Activated T-helper 1 cell treated with anti-CD3 and anti-CD28 coated beads, Interleukin-12 subunit alpha, Interleukin-12 subunit beta, Interleukin-2, Interleukin-4 antibody, amounts not matched to agents 30 ng/mL and 10 ng/mL and 1 ng/mL, durations not matched to agents 14 hours and 24 hours and 36 hours (primary cell): ENCODE measurements at regions of chr2 and their contacts with region 1.

Region 1: DNA sequence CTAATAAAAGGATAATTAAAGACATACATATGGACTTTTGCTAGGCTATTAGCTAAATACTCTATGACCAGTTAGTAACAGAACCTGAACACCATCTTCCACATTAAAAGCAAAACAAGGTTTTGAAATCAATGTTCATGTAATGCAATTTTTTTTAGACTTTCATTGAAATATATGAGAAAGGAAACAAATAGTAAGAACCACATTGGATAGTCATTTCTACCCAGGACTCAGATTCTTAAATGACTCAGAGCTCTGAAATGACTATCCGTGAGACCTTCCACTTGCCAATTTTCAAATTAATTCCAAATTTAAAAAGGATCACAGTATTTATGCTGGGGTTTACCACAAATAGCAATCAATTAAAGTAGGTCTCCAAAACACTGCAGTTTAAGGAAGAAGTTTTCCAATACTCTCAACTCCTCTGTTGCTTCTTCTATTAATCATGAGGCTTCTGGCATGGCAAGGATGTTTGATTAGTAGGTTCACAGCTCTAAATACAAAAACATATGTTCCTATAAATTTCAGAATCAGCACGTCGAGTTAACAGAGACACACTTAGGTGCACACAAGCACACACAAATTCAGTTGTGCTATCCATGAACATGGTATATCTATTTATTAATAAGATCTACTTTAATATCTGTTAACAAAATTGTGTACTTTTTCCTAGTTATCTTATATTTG is 841.0 kb downstream of the RNF144A start:
- DNase-seq: no peak
- H3K4me3 Mint-ChIP-seq: no peak overlapping the region
- H3K27ac Mint-ChIP-seq: peak overlapping the region; percentile 76
- H3K4me1 Mint-ChIP-seq: peaks cover 22% of the 10 kb centered on the region
- H3K27me3 Mint-ChIP-seq: no peaks in the 10 kb centered on the region

Region 2: GRCh38 chr2:7450188-7450832 is 307.9 kb before region 1 on chr2:
- intact Hi-C with region 1: loop called (anchors 1 kb)
- DNase-seq: peak; percentile 65
- H3K4me3 Mint-ChIP-seq: peak overlapping the region; percentile 9
- H3K27ac Mint-ChIP-seq: peak overlapping the region; percentile 98
- H3K4me1 Mint-ChIP-seq: peaks cover 90% of the 10 kb centered on the region
- H3K27me3 Mint-ChIP-seq: no peaks in the 10 kb centered on the region

Region 3: GRCh38 chr2:7567646-7568045 is 190.6 kb before region 1 on chr2:
- intact Hi-C with region 1: loop called (anchors 1 kb)
- DNase-seq: peak; percentile 47
- H3K4me3 Mint-ChIP-seq: peak overlapping the region; percentile 25
- H3K27ac Mint-ChIP-seq: peak overlapping the region; percentile 90
- H3K4me1 Mint-ChIP-seq: peaks cover 59% of the 10 kb centered on the region
- H3K27me3 Mint-ChIP-seq: no peaks in the 10 kb centered on the region

Region 4: GRCh38 chr2:7672027-7672684 is 86.1 kb before region 1 on chr2:
- intact Hi-C with region 1: loop called (anchors 1 kb)
- DNase-seq: peak; percentile 43
- H3K4me3 Mint-ChIP-seq: peak overlapping the region; percentile 71
- H3K27ac Mint-ChIP-seq: peak overlapping the region; percentile 93
- H3K4me1 Mint-ChIP-seq: peaks cover 79% of the 10 kb centered on the region
- H3K27me3 Mint-ChIP-seq: no peaks in the 10 kb centered on the region

Region 5: GRCh38 chr2:7744827-7745226 is 13.4 kb before region 1 on chr2:
- intact Hi-C with region 1: loop called (anchors 2 kb)
- DNase-seq: peak; percentile 35
- H3K4me3 Mint-ChIP-seq: peak overlapping the region; percentile 8
- H3K27ac Mint-ChIP-seq: peak overlapping the region; percentile 81
- H3K4me1 Mint-ChIP-seq: peaks cover 44% of the 10 kb centered on the region
- H3K27me3 Mint-ChIP-seq: no peaks in the 10 kb centered on the region

Region 6: GRCh38 chr2:7780321-7780720 is 22.1 kb after region 1 on chr2:
- intact Hi-C with region 1: no loop called
- DNase-seq: no peak
- H3K4me3 Mint-ChIP-seq: no peak overlapping the region
- H3K27ac Mint-ChIP-seq: no peak overlapping the region
- H3K4me1 Mint-ChIP-seq: peaks cover 4% of the 10 kb centered on the region
- H3K27me3 Mint-ChIP-seq: peaks cover 2% of the 10 kb centered on the region

Region 7: GRCh38 chr2:7930800-7931635 is 172.8 kb after region 1 on chr2:
- intact Hi-C with region 1: loop called (anchors 1 kb)
- DNase-seq: no peak
- H3K4me3 Mint-ChIP-seq: no peak overlapping the region
- H3K27ac Mint-ChIP-seq: peak overlapping the region; percentile 81
- H3K4me1 Mint-ChIP-seq: peaks cover 11% of the 10 kb centered on the region
- H3K27me3 Mint-ChIP-seq: no peaks in the 10 kb centered on the region

Region 8: DNA sequence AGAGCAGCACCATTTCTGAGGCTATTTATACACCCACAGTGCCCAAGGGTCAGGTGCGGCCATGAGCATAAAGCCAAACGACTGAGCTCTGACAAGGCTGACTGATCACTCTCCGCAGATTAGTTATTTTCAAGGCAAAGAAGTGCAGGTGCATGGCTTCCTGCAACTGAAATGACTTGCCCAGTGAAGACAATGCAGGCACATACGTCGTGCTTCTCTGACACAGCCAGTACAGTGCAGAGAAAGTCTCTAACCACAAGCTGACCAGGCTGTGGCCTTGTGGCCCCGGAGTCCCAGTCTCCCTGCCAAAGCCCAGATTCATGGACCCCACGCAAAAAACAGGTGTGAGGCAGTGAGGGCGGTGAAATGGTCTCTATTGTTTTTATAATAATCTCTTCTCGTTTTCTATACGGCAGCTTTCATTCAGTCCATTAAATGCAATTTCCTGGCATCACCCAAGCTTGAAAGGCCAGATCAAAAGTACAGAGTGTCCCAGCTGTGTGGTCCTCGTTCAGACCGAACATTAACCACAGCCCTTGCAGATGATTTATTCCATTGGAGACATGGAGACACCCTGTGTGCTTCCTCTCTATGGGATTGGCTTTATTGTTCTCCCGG is 476.6 kb after region 1 on chr2:
- intact Hi-C with region 1: loop called (anchors 5 kb)
- DNase-seq: no peak
- H3K4me3 Mint-ChIP-seq: no peak overlapping the region
- H3K27ac Mint-ChIP-seq: no peak overlapping the region
- H3K4me1 Mint-ChIP-seq: peaks cover 53% of the 10 kb centered on the region
- H3K27me3 Mint-ChIP-seq: peaks cover 9% of the 10 kb centered on the region